ENCODE measurements at regions of chr9 and their contacts with region 1.

Region 1: GRCh38 chr9:98074115-98074990 is 17.8 kb downstream of the NANS start:
- DNase-seq: peak; percentile 50 to 74
- ATAC-seq: peak in 3 of 4 donors; percentile 53 to 76 (median 67)
- H3K4me3 ChIP-seq: no peak overlapping the region
- H3K27ac ChIP-seq: no peak overlapping the region
- H3K4me1 ChIP-seq: no peaks in the 10 kb centered on the region
- H3K27me3 ChIP-seq: no peaks in the 10 kb centered on the region
- CTCF ChIP-seq: peak; percentile 88

Region 2: GRCh38 chr9:98045234-98046179 is 28.8 kb before region 1 on chr9:
- intact Hi-C with region 1: no loop called
- DNase-seq: no peak
- ATAC-seq: no peak
- H3K4me3 ChIP-seq: peak overlapping the region; percentile 24
- H3K27ac ChIP-seq: no peak overlapping the region
- H3K4me1 ChIP-seq: no peaks in the 10 kb centered on the region
- H3K27me3 ChIP-seq: no peaks in the 10 kb centered on the region
- CTCF ChIP-seq: no peak

Region 3: DNA sequence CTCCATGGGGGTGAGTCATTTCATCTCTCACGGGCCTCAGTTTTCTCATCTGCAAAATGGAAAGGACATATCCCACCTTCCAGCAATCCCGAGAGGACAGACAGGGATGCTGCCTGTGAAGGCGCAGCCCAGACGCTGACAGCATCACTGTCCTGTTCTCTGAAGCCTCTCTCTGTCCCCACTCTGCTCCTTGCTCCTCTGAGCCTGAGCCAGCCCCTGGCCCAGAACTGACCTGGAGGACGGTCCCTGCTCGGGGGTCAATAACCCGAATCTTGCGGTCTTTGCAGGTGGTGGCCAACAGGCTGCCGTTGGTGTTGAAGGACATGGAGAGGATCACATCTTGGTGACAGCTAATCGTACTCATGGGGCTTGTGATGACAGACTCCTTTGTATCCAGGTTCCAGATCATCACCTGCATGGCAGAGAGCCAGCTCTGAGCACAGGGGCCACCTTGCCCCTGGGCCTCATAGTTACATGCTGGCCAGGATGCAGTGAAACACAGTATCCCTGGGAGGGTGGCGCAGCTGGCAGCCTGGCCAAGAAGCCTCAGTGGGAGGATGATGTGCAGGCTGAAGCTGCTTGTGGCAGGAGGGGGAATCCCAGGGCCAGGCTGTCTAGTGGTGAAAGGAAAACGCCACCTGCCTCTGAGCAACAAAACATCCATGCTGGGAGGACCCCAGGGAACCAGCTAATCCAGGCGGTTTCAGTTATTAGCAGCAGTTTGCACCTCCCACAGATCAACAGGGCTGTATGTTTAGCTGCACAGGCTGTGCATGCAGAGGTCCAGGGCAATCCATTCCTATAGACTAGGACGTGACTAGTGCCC is 58.7 kb after region 1 on chr9:
- intact Hi-C with region 1: loop called in 1 of 2 experiments (anchors 10 kb)
- DNase-seq: no peak
- ATAC-seq: no peak
- H3K4me3 ChIP-seq: no peak overlapping the region
- H3K27ac ChIP-seq: no peak overlapping the region
- H3K4me1 ChIP-seq: no peaks in the 10 kb centered on the region
- H3K27me3 ChIP-seq: no peaks in the 10 kb centered on the region
- CTCF ChIP-seq: no peak

Region 4: DNA sequence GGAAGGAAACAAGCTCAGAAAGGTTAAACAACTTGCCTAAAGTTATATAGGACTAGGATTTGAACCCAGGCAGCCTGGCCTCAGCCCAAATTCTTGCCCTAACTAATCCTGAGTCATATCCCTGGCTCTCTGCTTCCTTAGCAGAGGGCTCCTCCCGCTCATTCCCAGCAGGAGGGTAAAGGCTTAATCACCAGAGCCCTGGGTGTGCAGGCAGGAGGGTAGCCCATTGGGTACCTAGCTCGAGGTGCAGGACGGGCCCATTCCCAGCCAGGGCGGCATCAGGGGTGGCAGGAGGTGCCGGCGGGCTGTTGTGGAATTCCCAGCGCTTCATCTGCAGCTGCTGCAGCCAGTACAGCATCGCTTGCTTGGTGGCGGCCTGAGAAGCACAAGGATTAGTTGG is 177.2 kb after region 1 on chr9:
- intact Hi-C with region 1: no loop called
- DNase-seq: no peak
- ATAC-seq: no peak
- H3K4me3 ChIP-seq: no peak overlapping the region
- H3K27ac ChIP-seq: no peak overlapping the region
- H3K4me1 ChIP-seq: no peaks in the 10 kb centered on the region
- H3K27me3 ChIP-seq: no peaks in the 10 kb centered on the region
- CTCF ChIP-seq: no peak

Region 5: GRCh38 chr9:98401140-98402018 is 327.0 kb after region 1 on chr9:
- intact Hi-C with region 1: no loop called
- DNase-seq: no peak
- ATAC-seq: no peak
- H3K4me3 ChIP-seq: no peak overlapping the region
- H3K27ac ChIP-seq: no peak overlapping the region
- H3K4me1 ChIP-seq: no peaks in the 10 kb centered on the region
- H3K27me3 ChIP-seq: peaks cover 0 to 6% (median 2%) of the 10 kb centered on the region in 3 donors
- CTCF ChIP-seq: no peak

Measured in psoas muscle (tissue), 8 donors.